Right ventricle myocardium superior (tissue), 1 donor: ENCODE measurements at regions of chr9 and their contacts with region 1.

Region 1: GRCh38 chr9:116572095-116572748 is 114.9 kb upstream of the TRIM32 start:
- DNase-seq: peak; percentile 94
- ATAC-seq: peak; percentile 96

Region 2: GRCh38 chr9:115883457-115884329 is 688.5 kb before region 1 on chr9:
- intact Hi-C with region 1: loop called (anchors 5 kb)
- DNase-seq: no peak
- ATAC-seq: peak; percentile 91

Region 3: GRCh38 chr9:116156621-116157314 is 415.5 kb before region 1 on chr9:
- intact Hi-C with region 1: loop called (anchors 5 kb)
- DNase-seq: peak; percentile 82
- ATAC-seq: peak; percentile 90

Region 4: DNA sequence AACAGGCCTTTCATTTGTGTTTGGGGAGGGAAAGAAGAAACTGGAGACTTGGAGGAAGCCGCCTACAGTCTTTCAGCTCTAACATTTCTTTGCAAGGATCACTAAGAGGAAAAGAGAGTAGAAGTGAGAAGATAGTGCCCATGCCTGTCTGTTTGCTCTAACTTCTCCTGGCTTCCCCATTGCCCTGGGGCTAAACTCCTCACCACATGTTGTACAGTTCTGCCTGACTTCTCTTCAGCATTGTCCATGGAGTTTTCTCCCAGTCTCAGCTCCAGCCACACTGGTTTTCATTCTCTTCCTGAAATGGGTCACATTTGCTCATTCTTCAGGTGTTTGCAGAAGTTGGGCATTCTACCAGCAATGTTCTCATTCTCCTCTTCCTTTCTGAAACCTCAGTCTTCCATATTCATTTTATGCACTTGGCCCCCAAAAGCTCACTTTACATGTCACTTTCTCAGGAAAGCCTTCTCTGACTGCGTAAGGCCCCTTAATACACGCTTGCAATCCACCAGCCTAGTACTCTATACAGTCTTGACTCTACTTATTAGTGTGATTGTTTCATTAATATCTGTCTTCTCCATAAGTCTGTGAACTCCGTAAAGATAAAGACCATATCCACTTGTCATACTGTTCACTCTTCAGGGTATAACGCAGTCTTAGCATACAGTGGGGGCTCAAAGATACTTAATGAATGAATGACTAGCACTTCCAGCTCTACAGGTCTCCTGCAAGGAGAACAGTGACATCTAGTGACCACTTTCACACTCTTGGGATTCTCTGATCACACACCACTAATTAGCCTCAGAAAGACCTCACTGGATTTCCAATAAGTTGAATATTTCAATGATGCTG is 74.7 kb after region 1 on chr9:
- intact Hi-C with region 1: loop called (anchors 10 kb)
- DNase-seq: no peak
- ATAC-seq: peak; percentile 72